Endothelial cell of umbilical vein (primary cell): ENCODE measurements at regions of chr2 and their contacts with region 1.

Region 1: GRCh38 chr2:55175254-55176025 is 56.7 kb downstream of the CLHC1 start:
- DNase-seq: peak; percentile 70
- H3K4me3 ChIP-seq: no peak overlapping the region
- H3K27ac ChIP-seq: no peak overlapping the region
- H3K4me1 ChIP-seq: no peaks in the 10 kb centered on the region
- H3K27me3 ChIP-seq: no peaks in the 10 kb centered on the region
- CTCF ChIP-seq: peak; percentile 33 to 38
- POLR2A ChIP-seq: no peak

Region 2: DNA sequence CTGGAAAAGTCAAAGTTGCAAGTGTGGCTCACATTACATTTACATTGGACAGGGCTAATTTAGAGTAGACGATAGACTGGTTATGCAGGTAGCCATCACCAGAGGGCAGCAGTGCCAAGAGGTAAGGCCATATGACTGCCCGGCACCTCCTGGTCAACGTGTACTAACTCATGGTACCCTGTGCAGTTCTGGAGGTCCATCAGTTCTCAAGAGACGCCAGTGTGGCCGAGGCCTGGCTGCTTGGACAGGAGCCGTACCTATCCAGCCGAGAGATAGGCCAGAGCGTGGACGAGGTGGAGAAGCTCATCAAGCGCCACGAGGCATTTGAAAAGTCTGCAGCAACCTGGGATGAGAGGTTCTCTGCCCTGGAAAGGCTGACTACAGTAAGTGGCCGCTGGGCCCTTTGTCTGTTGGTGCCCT is 517.8 kb before region 1 on chr2:
- CTCF ChIA-PET with region 1: no interaction called
- POLR2A ChIA-PET with region 1: no interaction called
- dilution Hi-C with region 1: no loop called
- intact Hi-C with region 1: loop called (anchors 2 kb)
- DNase-seq: peak; percentile 61
- H3K4me3 ChIP-seq: no peak overlapping the region
- H3K27ac ChIP-seq: no peak overlapping the region
- H3K4me1 ChIP-seq: no peaks in the 10 kb centered on the region
- H3K27me3 ChIP-seq: no peaks in the 10 kb centered on the region
- CTCF ChIP-seq: peak; percentile 42 to 58
- POLR2A ChIP-seq: no peak

Region 3: GRCh38 chr2:54665436-54665856 is 510.0 kb before region 1 on chr2:
- CTCF ChIA-PET with region 1: interaction called, 26 read pairs
- POLR2A ChIA-PET with region 1: no interaction called
- dilution Hi-C with region 1: no loop called
- intact Hi-C with region 1: no loop called
- DNase-seq: peak; percentile 76
- H3K4me3 ChIP-seq: no peak overlapping the region
- H3K27ac ChIP-seq: no peak overlapping the region
- H3K4me1 ChIP-seq: peaks cover 16% of the 10 kb centered on the region
- H3K27me3 ChIP-seq: no peaks in the 10 kb centered on the region
- CTCF ChIP-seq: peak; percentile 74
- POLR2A ChIP-seq: no peak

Region 4: GRCh38 chr2:54673501-54673998 is 501.9 kb before region 1 on chr2:
- CTCF ChIA-PET with region 1: no interaction called
- POLR2A ChIA-PET with region 1: no interaction called
- dilution Hi-C with region 1: no loop called
- intact Hi-C with region 1: loop called (anchors 2 kb)
- DNase-seq: peak; percentile 97
- H3K4me3 ChIP-seq: no peak overlapping the region
- H3K27ac ChIP-seq: peak overlapping the region; percentile 89
- H3K4me1 ChIP-seq: peaks cover 14% of the 10 kb centered on the region
- H3K27me3 ChIP-seq: peaks cover 0 to 2% of the 10 kb centered on the region in 2 experiments
- CTCF ChIP-seq: no peak
- POLR2A ChIP-seq: no peak

Region 5: DNA sequence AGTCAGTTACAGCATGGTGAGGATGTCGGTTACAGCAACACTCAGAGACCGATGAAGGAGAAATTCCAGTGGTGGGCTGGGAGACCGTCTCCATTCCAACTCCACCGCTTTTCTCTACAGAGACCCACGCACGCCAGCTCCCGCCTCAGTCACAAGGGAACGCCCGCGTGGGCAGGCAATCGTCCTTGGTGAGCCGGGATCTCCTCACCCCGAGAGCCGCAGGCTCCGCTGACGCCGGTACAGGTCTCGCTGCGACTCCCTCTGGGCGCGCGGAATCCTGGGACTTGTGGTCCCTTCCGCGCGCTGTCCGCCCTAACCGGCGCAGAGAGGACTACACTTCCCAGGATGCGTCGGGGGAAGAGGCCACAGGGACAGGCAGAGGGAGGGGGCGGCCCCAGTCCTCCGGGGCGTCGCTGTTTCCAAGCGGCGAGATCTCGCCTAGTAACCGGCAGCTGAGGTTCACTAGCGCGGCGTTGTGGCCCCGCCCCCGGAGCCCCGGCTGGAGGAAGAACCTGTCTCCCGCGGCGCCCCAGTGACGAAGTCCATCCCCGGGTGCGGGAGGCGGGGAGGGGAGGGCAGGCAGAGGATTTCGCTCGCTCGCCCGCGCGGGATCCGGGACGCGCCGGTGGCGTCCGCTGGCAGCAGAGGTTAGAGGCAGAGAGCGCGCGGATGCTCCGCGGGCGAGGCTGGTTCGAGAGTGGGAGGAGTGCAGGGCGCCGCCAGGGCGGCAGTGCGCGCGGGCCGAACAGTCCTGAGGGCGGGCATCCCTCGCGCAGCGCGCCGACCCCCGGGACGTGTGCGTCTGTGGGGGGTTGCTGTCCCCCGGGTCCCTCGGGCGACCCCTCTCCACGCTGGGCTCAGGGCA is 452.1 kb before region 1 on chr2 and contains the start of gene EML6:
- CTCF ChIA-PET with region 1: no interaction called
- POLR2A ChIA-PET with region 1: no interaction called
- dilution Hi-C with region 1: no loop called
- intact Hi-C with region 1: loop called (anchors 5 kb)
- DNase-seq: peak; percentile 99
- H3K4me3 ChIP-seq: peak within 1 kb of the TSS; percentile 86 to 99 (median 96)
- H3K27ac ChIP-seq: peak within 1 kb of the TSS; percentile 78
- H3K4me1 ChIP-seq: peaks cover 22% of the 10 kb centered on the region
- H3K27me3 ChIP-seq: peaks cover 11 to 15% of the 10 kb centered on the region in 2 experiments
- CTCF ChIP-seq: peak; percentile 4 to 36
- POLR2A ChIP-seq: peak; percentile 88
- total RNA-seq, gene EML6: 1.3 and 2.1 TPM in 2 replicates

Region 6: GRCh38 chr2:54763636-54764291 is 411.7 kb before region 1 on chr2:
- CTCF ChIA-PET with region 1: no interaction called
- POLR2A ChIA-PET with region 1: no interaction called
- dilution Hi-C with region 1: no loop called
- intact Hi-C with region 1: loop called (anchors 10 kb)
- DNase-seq: no peak
- H3K4me3 ChIP-seq: no peak overlapping the region
- H3K27ac ChIP-seq: no peak overlapping the region
- H3K4me1 ChIP-seq: peaks cover 11% of the 10 kb centered on the region
- H3K27me3 ChIP-seq: no peaks in the 10 kb centered on the region
- CTCF ChIP-seq: peak in 1 of 2 donors; percentile 20
- POLR2A ChIP-seq: no peak

Region 7: GRCh38 chr2:55014962-55015939 is 160.2 kb before region 1 on chr2:
- CTCF ChIA-PET with region 1: interaction called, 47 read pairs
- POLR2A ChIA-PET with region 1: no interaction called
- dilution Hi-C with region 1: no loop called
- intact Hi-C with region 1: loop called (anchors 1 kb)
- DNase-seq: peak; percentile 72
- H3K4me3 ChIP-seq: no peak overlapping the region
- H3K27ac ChIP-seq: no peak overlapping the region
- H3K4me1 ChIP-seq: peaks cover 63% of the 10 kb centered on the region
- H3K27me3 ChIP-seq: no peaks in the 10 kb centered on the region
- CTCF ChIP-seq: peak; percentile 49
- POLR2A ChIP-seq: no peak